HAP-1 (cell line): ENCODE measurements at regions of chr17 and their contacts with region 1.

Region 1: GRCh38 chr17:28967221-28968140 is 16.2 kb upstream of the PHF12 start:
- DNase-seq: no peak
- H3K4me3 ChIP-seq: no peak overlapping the region
- H3K4me1 ChIP-seq: peaks cover 6% of the 10 kb centered on the region; the same call in 1 of the 2 replicates
- H3K27me3 ChIP-seq: peaks cover 11% of the 10 kb centered on the region

Region 2: DNA sequence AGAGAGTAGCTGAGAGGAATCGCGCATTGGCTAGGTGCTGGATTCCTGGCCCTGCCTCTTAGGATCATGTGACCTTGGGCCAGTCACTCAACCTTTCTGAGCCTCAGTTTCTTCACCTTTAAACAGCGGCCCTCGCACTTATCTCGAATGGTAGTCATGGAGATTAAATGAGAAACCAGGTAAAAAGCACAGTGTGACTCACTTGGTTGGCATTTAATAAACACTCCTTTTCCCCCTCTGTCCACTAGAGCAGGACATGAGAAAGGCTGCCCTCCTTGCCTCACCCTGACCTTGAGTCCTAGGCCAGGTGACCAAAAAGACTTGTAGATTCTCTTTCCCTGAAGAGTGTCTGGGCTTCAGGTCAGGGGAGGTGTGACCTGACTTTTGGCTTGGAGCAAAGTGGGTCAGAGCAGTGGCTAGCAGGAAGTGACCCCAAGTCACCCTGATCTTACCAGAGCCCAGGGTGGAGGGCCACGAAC is 140.5 kb after region 1 on chr17:
- in situ Hi-C with region 1: loop called (anchors 5 kb)
- DNase-seq: no peak
- H3K4me3 ChIP-seq: no peak overlapping the region
- H3K4me1 ChIP-seq: no peaks in the 10 kb centered on the region
- H3K27me3 ChIP-seq: no peaks in the 10 kb centered on the region